ENCODE measurements at regions of chr4 and their contacts with region 1.

Region 1: DNA sequence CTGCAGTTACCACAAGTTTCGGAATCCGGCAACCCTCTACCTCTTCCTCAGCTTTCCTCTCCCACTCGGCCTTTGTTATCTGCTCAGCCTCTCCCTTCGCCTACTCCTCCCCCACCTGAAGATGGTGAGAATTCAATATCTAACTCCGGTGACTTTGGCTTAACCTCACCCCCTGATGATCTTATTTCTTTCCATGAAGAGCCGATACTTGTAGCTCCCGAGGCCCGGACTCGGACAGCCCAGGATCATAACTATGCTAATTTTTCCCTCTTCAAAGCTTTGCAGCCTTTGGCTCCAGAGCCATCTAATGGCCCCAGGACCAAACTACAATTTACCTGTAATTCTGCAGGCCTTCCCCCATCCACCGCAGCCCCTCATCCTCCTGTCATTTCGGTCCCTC is 32.0 kb upstream of the MGST2 start:
- DNase-seq: peak; percentile 29
- H3K4me3 ChIP-seq: no peak overlapping the region
- H3K27ac ChIP-seq: no peak overlapping the region
- H3K4me1 ChIP-seq: no peaks in the 10 kb centered on the region
- H3K27me3 ChIP-seq: peaks cover 13 to 14% of the 10 kb centered on the region in 2 experiments
- CTCF ChIP-seq: peak; percentile 11 to 40
- POLR2A ChIP-seq: no peak

Region 2: GRCh38 chr4:139509727-139510410 is 123.8 kb before region 1 on chr4:
- CTCF ChIA-PET with region 1: no interaction called
- POLR2A ChIA-PET with region 1: no interaction called
- dilution Hi-C with region 1: no loop called
- intact Hi-C with region 1: loop called (anchors 5 kb)
- DNase-seq: peak; percentile 45
- H3K4me3 ChIP-seq: no peak overlapping the region
- H3K27ac ChIP-seq: no peak overlapping the region
- H3K4me1 ChIP-seq: peaks cover 7% of the 10 kb centered on the region
- H3K27me3 ChIP-seq: no peaks in the 10 kb centered on the region
- CTCF ChIP-seq: peak; percentile 16 to 38
- POLR2A ChIP-seq: no peak

Region 3: GRCh38 chr4:139619644-139620043 is 14.0 kb before region 1 on chr4:
- CTCF ChIA-PET with region 1: interaction called, 12 read pairs
- POLR2A ChIA-PET with region 1: no interaction called
- dilution Hi-C with region 1: no loop called
- intact Hi-C with region 1: no loop called
- DNase-seq: no peak
- H3K4me3 ChIP-seq: no peak overlapping the region
- H3K27ac ChIP-seq: no peak overlapping the region
- H3K4me1 ChIP-seq: no peaks in the 10 kb centered on the region
- H3K27me3 ChIP-seq: peaks cover 5 to 7% of the 10 kb centered on the region in 2 experiments
- CTCF ChIP-seq: peak; percentile 33 to 50
- POLR2A ChIP-seq: no peak

Region 4: DNA sequence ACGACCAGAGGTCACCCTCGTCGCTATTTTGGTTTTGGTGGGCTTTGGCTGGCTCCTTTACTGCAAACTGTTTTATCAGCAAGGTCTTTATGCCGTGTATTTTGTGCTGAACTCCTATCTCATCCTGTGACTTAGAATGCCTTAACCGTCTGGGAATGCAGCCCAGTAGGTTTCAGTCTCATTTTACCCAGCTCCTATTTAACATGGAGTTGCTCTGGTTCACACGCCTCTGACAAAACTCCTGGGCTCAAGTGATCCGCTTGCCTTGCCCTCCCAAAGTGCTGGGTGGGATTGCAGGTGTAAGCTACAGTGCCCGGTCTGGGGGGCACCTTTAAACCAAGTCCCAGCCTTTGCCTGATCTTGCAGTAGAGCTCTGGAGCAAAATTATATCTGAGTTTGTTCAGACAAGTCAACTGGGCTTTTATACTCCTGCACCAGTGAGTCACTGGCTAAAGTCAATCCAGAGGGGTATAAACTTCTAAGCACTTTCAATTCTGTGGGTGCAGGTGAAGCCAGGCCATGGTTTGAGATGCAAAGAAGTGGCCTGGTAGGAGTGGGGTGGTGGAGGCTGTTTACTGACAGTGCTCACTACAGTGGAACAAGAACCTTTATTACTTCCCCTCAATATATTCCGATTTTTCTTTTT is 82.2 kb after region 1 on chr4:
- CTCF ChIA-PET with region 1: no interaction called
- POLR2A ChIA-PET with region 1: no interaction called
- dilution Hi-C with region 1: no loop called
- intact Hi-C with region 1: no loop called
- DNase-seq: no peak
- H3K4me3 ChIP-seq: no peak overlapping the region
- H3K27ac ChIP-seq: no peak overlapping the region
- H3K4me1 ChIP-seq: peaks cover 5% of the 10 kb centered on the region
- H3K27me3 ChIP-seq: no peaks in the 10 kb centered on the region
- CTCF ChIP-seq: no peak
- POLR2A ChIP-seq: no peak

Measured in endothelial cell of umbilical vein (primary cell).